ENCODE measurements at regions of chr11 and their contacts with region 1.

Region 1: GRCh38 chr11:30218278-30218677 is 12.5 kb upstream of the FSHB start:
- DNase-seq: no peak
- H3K4me3 ChIP-seq: no peak overlapping the region
- H3K27ac ChIP-seq: no peak overlapping the region
- H3K4me1 ChIP-seq: no peaks in the 10 kb centered on the region
- CTCF ChIP-seq: no peak

Region 2: DNA sequence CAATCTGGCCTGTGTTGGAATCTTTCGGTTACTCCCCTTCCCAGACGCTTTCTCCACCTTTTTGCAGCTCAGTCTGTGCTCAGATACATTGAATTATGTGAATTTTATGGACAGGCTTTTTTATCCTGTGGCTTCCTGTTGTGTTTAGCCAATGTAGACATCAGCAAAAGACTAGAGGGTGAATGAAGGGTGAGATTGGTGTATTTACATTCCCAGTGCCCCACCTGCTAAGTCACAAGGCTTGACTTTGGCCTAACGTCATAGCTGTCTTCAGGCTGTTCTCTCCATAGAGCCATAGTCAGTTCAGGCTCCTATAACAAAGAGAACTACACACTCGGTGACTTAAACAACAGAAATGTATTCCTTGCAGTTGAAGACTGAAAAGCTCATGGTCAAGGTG is 85.0 kb before region 1 on chr11:
- CTCF ChIA-PET with region 1: no interaction called
- POLR2A ChIA-PET with region 1: no interaction called
- intact Hi-C with region 1: no loop called
- DNase-seq: no peak
- H3K4me3 ChIP-seq: no peak overlapping the region
- H3K27ac ChIP-seq: no peak overlapping the region
- H3K4me1 ChIP-seq: no peaks in the 10 kb centered on the region
- CTCF ChIP-seq: no peak

Region 3: DNA sequence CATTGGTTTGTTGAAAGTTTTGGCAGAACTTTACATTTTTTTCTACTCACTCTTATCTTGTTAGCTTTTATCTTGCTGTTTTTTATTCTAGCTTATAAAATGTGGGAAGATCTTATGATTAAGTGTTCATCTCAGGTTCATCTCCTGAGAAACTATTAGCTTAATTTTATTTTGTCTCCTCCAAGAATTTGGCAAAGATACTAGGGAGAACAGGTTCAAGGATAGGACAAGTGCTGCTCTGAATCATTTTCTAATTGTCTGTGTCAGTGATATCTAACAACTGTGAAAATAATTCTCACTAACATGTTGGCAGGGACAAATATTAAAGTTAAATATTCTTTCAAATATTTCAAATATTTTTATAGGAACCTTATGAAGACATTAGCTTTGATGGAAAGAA is 25.7 kb before region 1 on chr11:
- CTCF ChIA-PET with region 1: no interaction called
- POLR2A ChIA-PET with region 1: no interaction called
- intact Hi-C with region 1: no loop called
- DNase-seq: no peak
- H3K4me3 ChIP-seq: no peak overlapping the region
- H3K27ac ChIP-seq: no peak overlapping the region
- H3K4me1 ChIP-seq: no peaks in the 10 kb centered on the region
- CTCF ChIP-seq: no peak

Region 4: DNA sequence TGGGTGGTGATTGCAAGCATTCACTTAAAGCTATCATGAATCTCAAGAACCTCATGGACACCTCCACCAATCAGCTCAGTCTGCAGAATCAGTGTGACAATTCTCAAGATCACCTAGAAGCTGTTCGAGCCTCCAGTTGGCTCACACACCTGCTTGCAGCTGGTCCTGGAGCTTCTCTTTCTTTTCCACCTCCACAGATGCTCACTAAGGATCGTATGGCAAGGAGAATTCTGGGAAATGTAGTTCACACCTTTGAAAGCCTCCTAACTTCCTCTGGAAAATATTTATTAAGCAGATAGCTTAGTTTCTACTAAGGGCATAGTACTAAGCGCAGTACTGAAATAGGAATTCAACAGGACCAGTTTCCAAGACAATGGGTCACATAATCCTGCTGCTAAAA is 38.8 kb after region 1 on chr11:
- CTCF ChIA-PET with region 1: no interaction called
- POLR2A ChIA-PET with region 1: no interaction called
- intact Hi-C with region 1: loop called (anchors 1 kb)
- DNase-seq: no peak
- H3K4me3 ChIP-seq: no peak overlapping the region
- H3K27ac ChIP-seq: no peak overlapping the region
- H3K4me1 ChIP-seq: no peaks in the 10 kb centered on the region
- CTCF ChIP-seq: no peak

Region 5: DNA sequence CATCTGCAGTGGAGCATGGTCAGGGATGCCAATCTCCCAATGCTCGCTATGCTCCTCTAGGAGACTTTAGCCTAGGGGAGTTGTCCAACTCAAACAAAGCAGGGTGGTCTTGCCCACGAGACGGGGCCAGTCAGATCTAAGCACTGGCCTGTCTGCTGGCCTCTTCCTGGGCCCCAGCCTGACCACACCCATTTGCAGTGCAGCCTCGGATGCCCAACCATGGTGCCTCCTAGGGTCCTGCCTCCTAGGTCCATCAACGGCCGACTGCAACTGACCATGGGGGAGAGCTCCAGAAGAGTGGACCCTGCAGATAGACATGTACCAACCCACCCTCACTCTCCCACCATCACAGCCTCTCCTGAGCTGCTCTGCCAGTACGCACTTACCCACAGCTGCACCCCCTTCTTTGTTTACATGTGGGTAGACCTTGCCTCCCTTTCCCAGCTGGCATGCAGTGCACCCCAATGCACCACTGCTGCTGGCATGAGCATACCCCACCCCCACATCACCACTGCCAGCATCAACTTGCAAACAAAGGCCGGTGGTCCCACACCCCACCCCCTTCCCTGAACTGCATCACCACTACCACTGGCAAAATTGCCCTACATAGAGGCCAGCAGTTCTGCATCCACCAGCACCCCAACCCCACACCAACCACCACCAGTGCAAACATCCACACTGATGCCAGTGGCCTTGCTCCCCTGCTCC is 77.1 kb after region 1 on chr11:
- CTCF ChIA-PET with region 1: no interaction called
- POLR2A ChIA-PET with region 1: no interaction called
- intact Hi-C with region 1: no loop called
- DNase-seq: no peak
- H3K4me3 ChIP-seq: no peak overlapping the region
- H3K27ac ChIP-seq: no peak overlapping the region
- H3K4me1 ChIP-seq: no peaks in the 10 kb centered on the region
- CTCF ChIP-seq: no peak

Measured in OCI-LY7 (cell line).